Ovary (tissue), 10 donors: ENCODE measurements at regions of chr1 and their contacts with region 1.

Region 1: GRCh38 chr1:177181631-177182291 is 11.0 kb downstream of the BRINP2 start:
- DNase-seq: peak; percentile 23 to 73 (median 40)
- H3K4me3 ChIP-seq: no peak overlapping the region
- H3K27ac ChIP-seq: no peak overlapping the region
- H3K4me1 ChIP-seq: peaks cover 2% of the 10 kb centered on the region
- H3K27me3 ChIP-seq: no peaks in the 10 kb centered on the region
- CTCF ChIP-seq: peak in 2 of 3 donors; percentile 43 to 57
- EP300 ChIP-seq: no peak
- POLR2A ChIP-seq: no peak

Region 2: GRCh38 chr1:176897350-176898236 is 284.2 kb before region 1 on chr1:
- intact Hi-C with region 1: loop called in 3 of 4 experiments (anchors 5 to 10 kb)
- DNase-seq: peak; percentile 47 to 71 (median 63)
- H3K4me3 ChIP-seq: peak overlapping the region; percentile 0
- H3K27ac ChIP-seq: no peak overlapping the region
- H3K4me1 ChIP-seq: peaks cover 2% of the 10 kb centered on the region
- H3K27me3 ChIP-seq: no peaks in the 10 kb centered on the region
- CTCF ChIP-seq: peak; percentile 24 to 55 (median 52)
- EP300 ChIP-seq: no peak
- POLR2A ChIP-seq: no peak

Region 3: DNA sequence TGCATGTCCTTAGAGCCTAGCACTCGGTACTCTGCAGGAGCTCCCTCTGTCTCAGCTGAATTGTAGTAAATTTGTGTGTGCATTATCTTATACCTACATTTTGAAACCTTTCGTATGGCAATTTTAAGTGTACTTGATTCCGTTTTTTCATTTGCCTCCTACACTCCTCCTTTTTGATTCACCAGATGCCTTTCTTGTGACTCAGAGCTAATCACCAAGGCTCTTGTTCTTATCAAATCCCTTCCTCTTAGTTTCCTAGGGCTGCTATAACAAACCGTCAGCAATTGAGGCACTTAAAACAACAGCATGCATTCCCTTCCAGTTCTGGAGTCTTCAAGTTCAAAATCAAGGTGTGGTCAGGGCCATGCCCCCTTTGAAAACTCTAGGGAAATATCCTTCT is 278.3 kb before region 1 on chr1:
- intact Hi-C with region 1: loop called in 3 of 4 experiments (anchors 5 to 10 kb)
- DNase-seq: no peak
- H3K4me3 ChIP-seq: no peak overlapping the region
- H3K27ac ChIP-seq: no peak overlapping the region
- H3K4me1 ChIP-seq: peaks cover 6% of the 10 kb centered on the region
- H3K27me3 ChIP-seq: no peaks in the 10 kb centered on the region
- CTCF ChIP-seq: no peak
- EP300 ChIP-seq: no peak
- POLR2A ChIP-seq: no peak

Region 4: GRCh38 chr1:177130451-177130945 is 51.3 kb before region 1 on chr1:
- intact Hi-C with region 1: no loop called
- DNase-seq: no peak
- H3K4me3 ChIP-seq: no peak overlapping the region
- H3K27ac ChIP-seq: no peak overlapping the region
- H3K4me1 ChIP-seq: no peaks in the 10 kb centered on the region
- H3K27me3 ChIP-seq: no peaks in the 10 kb centered on the region
- CTCF ChIP-seq: no peak
- EP300 ChIP-seq: no peak
- POLR2A ChIP-seq: no peak